Posterior vena cava (tissue), 2 donors: ENCODE measurements at regions of chr20 and their contacts with region 1.

Region 1: GRCh38 chr20:45322952-45323383 is 14.9 kb upstream of the MATN4 start:
- DNase-seq: no peak

Region 2: GRCh38 chr20:45311589-45312211 is 11.3 kb before region 1 on chr20:
- intact Hi-C with region 1: no loop called
- DNase-seq: peak; percentile 89

Region 3: DNA sequence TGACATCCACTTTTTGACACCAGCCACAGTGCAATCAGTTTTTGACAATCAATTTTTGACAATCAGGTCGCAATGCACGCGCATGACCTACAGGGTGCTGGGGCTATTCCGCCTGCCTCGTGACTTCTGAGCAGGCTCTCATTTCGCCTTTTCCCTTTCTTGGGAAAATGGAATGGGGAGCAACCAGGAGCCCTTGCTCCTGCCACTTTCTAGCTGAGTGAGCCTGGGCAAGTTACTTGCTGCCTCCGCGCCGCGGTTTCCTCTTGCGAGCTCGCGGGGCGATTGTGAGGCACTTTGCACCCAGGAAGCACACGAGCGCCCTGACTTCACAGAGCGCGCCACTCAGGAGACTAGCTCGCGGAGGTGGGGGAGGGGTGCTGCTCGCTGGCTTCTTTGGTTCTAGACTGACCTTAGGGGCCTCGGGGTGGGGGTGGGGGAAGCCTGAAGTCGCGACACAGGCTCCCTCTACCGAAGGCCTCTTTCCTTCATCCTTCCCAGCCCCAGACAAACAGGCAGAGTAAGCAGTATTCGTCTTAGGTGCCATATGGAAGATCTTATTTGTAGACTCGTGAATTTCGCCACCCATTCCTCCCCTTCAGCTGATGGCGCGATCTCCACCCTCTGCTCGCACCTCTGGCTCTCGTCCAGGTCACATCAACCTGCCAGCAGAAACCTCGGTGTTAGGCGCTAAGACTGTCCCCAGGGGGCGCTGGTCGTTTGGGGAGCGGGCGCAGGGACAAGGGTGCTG is 50.6 kb after region 1 on chr20:
- intact Hi-C with region 1: loop called in 1 of 2 experiments (anchors 5 kb)
- DNase-seq: peak; percentile 96

Region 4: DNA sequence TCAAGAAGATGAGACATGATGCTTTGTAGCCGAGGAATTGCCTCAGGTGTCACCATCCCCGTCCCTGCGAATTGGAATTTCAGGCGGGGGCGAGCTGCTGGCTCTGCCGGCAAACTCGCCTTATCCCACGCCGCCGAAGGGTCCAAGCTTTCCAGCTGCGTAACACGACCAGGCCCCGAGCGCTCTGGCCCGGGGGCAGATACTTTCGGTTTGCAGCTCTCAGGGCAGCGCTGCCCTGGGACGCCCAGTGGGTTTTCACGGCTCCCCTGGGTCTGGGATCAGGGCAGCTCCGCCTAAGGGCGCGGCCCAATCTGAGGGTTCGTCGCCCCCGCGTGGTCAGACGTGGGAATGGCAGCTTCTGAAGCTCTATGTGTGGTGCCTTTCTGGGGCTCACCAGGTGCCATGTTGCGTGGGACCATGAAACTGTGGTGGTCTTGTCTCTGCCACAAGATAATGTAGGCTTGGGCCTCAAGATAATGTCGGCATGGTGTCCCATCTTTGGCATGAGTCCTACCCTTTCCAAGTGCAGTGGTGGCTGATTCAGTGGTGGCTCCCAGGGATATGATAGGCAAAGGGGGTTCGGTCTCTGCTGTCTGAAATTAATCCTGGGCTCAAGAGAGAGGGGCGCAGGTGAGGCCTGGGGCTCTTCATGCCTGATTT is 113.9 kb after region 1 on chr20:
- intact Hi-C with region 1: loop called in 1 of 2 experiments (anchors 5 kb)
- DNase-seq: peak; percentile 97

Region 5: DNA sequence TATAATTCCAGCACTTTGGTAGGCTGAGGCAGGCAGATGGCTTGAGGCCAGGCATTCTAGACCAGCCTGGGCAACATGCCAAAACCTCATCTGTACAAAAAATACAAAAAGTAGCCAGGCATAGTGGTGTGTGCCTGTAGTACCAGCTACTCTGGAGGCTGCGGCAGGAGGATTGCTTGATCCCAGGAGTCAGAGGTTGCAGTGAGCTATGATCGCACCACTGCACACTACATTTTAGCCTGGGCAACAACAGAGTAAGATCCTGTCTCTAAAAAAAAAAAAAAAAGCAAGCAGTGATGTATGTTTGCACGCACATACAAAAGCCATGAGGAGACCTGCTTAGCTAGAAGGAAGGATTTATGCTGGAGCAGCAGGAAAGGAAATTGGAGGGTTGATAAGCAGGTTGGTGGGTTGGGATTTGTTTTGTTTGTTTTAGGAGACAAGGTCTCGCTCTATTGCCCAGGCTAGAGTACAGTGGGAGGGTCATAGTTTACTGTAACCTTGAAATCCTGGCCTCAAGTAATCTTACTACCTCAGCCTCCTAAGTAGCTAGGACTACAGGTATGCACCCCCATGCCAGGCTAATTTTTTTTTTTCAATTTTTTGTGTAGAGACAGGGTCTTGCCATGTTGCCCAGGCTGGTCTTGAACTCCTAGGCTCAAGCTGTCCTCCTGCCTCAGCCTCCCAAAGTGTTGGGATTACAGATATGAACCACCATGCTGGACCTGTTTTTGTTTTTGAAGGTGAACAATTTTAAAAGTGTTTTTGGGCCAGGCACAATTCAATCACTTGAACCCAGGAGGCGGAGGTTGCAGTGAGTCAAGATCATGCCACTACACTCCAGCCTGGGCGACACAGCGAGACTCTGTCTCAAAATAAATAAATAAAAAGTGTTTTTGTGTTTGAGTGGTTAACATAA is 538.4 kb after region 1 on chr20:
- intact Hi-C with region 1: loop called in 1 of 2 experiments (anchors 5 kb)
- DNase-seq: no peak